B cell (primary cell): ENCODE measurements at regions of chr10 and their contacts with region 1.

Region 1: DNA sequence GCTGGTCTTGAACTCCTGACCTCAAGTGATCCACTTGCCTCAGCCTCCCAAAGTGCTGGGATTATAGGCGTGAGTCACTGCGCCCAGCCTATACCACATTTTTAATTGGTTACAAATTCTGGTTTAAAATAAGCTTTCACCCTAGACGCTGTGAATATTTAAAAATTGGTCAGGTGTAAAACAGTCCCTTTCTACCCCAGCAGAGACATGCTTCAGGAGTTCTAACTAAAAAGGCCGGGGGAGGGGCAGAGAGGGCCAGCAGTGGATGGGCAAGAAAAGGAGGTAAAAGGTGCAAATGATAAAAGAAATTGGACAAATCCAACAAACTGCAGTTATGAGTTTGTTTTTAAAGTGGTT is 70.0 kb downstream of the WAPL start:
- DNase-seq: no peak
- ATAC-seq: no peak
- H3K4me3 ChIP-seq: no peak overlapping the region
- H3K4me3 Mint-ChIP-seq: no peak overlapping the region
- H3K27ac ChIP-seq: peak overlapping the region in 1 of 2 donors; percentile 7
- H3K27ac Mint-ChIP-seq: no peak overlapping the region
- H3K4me1 ChIP-seq: peaks cover 25 to 28% of the 10 kb centered on the region in 2 donors
- H3K4me1 Mint-ChIP-seq: peaks cover 38% of the 10 kb centered on the region
- H3K27me3 ChIP-seq: no peaks in the 10 kb centered on the region
- H3K27me3 Mint-ChIP-seq: no peaks in the 10 kb centered on the region
- CTCF ChIP-seq: no peak

Region 2: GRCh38 chr10:86411281-86411841 is 40.2 kb before region 1 on chr10:
- CTCF ChIA-PET with region 1: interaction called, 4 read pairs
- POLR2A ChIA-PET with region 1: no interaction called
- intact Hi-C with region 1: loop called (anchors 2 kb)
- DNase-seq: peak; percentile 40
- ATAC-seq: no peak
- H3K4me3 ChIP-seq: peak overlapping the region in 2 of 5 experiments; percentile 10 to 35
- H3K4me3 Mint-ChIP-seq: peak overlapping the region; percentile 46
- H3K27ac ChIP-seq: no peak overlapping the region
- H3K27ac Mint-ChIP-seq: peak overlapping the region; percentile 71
- H3K4me1 ChIP-seq: peaks cover 38 to 45% of the 10 kb centered on the region in 2 donors
- H3K4me1 Mint-ChIP-seq: peaks cover 45% of the 10 kb centered on the region
- H3K27me3 ChIP-seq: no peaks in the 10 kb centered on the region
- H3K27me3 Mint-ChIP-seq: peaks cover 4% of the 10 kb centered on the region
- CTCF ChIP-seq: no peak